ENCODE measurements at regions of chr12 and their contacts with region 1.

Region 1: DNA sequence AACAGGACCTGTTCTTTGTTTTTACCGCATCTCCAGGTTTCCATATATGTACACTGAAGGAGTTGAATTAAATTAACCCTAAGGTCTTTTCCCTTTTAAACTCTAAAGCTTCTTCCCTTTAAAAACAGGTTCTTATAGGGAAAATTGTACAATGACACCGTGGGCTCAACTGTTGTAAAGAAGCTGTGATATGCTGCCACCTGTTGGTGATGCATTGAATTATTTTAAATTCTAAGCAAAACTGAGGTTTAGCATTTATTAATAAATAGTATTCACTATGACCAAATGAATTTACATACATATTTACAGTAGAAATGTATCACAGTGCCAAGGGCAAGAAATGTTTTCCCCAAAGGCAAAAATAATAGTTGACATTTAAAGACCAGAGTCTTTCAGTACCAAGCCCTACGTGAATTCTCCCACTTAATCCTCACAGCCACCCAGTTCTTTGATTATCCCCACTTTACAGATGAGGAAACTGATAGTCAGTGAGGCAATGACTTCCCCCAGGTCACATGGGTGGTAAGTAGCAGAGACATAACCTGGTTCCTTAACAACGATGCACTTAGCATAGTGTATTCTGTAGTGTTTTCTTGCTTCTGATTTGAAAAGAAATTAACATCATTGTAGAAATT is 35.7 kb upstream of the TMEM263 start:
- DNase-seq: no peak
- ATAC-seq: no peak
- H3K4me3 Mint-ChIP-seq: peak overlapping the region; percentile 45
- H3K27ac Mint-ChIP-seq: no peak overlapping the region
- H3K4me1 Mint-ChIP-seq: peaks cover 28% of the 10 kb centered on the region
- H3K27me3 Mint-ChIP-seq: peaks cover 12% of the 10 kb centered on the region
- CTCF ChIP-seq: peak; percentile 63

Region 2: DNA sequence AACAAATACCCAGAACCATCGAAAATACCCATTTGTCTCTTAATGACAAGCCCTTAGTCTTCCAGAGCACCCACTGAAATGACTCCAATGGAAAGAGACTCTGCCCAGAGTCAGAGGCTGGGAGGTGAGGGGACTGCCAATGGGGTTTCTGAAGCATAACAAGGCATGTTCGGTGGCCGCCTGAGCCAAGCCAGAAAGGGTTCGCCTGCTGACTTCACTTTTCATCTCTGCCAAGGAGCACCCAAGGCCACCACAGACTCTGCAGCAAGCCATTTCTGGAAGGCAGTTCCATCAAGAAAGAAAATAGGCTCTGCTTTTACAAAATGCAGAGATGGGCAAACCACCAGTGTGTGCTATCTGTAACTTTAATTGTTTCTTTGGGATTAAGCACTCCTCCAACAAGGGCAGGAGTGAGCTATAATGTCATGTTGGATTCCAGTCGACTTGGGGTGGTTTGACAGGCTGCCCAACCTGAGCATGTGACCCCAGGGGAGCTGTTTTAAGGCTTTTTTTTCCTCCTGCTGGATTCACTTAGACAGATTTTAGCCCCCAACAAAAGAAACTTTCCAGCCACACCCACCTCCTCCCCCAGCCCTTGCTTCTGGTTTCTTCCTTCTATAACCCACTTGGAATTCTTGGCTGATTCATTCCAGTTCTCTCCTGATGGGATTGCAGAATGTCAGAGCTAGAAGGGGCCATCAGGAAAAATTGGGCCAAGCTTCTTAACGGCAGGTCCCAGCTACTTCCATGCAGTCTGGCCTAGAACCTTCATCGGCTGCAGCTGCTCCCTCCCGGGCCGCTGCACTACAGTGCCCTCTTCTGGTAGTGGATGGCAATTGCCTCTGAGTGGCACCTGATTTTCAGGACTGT is 696.3 kb before region 1 on chr12:
- CTCF ChIA-PET with region 1: interaction called, 25 read pairs
- POLR2A ChIA-PET with region 1: no interaction called
- DNase-seq: peak; percentile 84
- ATAC-seq: peak; percentile 95
- H3K4me3 Mint-ChIP-seq: no peak overlapping the region
- H3K27ac Mint-ChIP-seq: no peak overlapping the region
- H3K4me1 Mint-ChIP-seq: peaks cover 5% of the 10 kb centered on the region
- H3K27me3 Mint-ChIP-seq: no peaks in the 10 kb centered on the region
- CTCF ChIP-seq: peak; percentile 93

Region 3: DNA sequence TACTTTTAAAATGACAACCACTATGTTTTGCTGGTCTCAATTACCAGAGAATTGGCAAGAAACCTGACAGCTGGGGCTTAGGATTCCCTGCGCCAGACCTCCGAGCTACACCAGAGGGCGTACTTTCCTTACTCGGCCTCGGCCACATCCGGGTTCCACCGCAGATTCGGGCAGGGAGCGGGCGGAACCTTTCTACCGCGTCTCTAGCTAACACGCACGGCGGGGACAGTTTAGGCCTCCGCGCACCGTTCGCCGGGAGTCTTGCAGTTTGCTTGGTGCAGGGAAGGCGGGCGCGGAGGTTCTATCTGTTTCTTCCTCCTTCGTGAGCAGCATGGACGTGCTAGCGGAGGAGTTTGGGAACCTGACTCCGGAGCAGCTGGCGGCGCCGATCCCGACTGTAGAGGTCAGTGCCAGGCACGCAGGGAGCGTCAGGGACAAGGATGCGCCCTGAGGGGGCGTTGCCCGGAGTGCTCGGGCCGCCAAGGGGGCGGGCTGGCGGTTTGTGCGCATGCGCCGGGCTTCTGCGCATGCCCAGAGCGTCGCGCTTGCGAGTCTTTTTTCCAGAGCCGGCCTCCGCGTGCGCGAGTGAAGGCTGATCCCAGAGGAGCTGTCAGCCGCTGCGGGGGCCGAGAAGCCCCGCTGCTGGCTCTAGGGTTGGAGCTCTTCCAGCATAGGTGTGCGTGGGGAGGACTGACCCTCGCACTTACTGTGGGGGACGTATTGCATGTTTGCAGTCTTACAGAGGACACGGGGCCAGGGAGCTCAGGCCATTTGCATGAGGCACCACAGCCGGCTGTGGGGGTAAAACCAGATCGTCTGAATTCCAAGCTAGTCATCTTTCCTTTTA is 562.3 kb before region 1 on chr12 and contains the start of gene POLR3B:
- CTCF ChIA-PET with region 1: interaction called, 108 read pairs
- POLR2A ChIA-PET with region 1: interaction called, 9 read pairs
- DNase-seq: peak; percentile 95
- ATAC-seq: peak; percentile 91
- H3K4me3 Mint-ChIP-seq: peak within 1 kb of the TSS; percentile 86
- H3K27ac Mint-ChIP-seq: peak within 1 kb of the TSS; percentile 50
- H3K4me1 Mint-ChIP-seq: peaks cover 11% of the 10 kb centered on the region
- H3K27me3 Mint-ChIP-seq: no peaks in the 10 kb centered on the region; the same call in 1 of the 2 replicates
- CTCF ChIP-seq: peak; percentile 52
- total RNA-seq, gene POLR3B: 9.0 to 10.2 TPM (median 9.4 TPM) in 3 replicates

Region 4: GRCh38 chr12:106446419-106447092 is 473.5 kb before region 1 on chr12:
- CTCF ChIA-PET with region 1: interaction called, 14 read pairs
- POLR2A ChIA-PET with region 1: no interaction called
- DNase-seq: no peak
- ATAC-seq: no peak
- H3K4me3 Mint-ChIP-seq: no peak overlapping the region
- H3K27ac Mint-ChIP-seq: no peak overlapping the region
- H3K4me1 Mint-ChIP-seq: peaks cover 11% of the 10 kb centered on the region
- H3K27me3 Mint-ChIP-seq: no peaks in the 10 kb centered on the region
- CTCF ChIP-seq: no peak

Region 5: DNA sequence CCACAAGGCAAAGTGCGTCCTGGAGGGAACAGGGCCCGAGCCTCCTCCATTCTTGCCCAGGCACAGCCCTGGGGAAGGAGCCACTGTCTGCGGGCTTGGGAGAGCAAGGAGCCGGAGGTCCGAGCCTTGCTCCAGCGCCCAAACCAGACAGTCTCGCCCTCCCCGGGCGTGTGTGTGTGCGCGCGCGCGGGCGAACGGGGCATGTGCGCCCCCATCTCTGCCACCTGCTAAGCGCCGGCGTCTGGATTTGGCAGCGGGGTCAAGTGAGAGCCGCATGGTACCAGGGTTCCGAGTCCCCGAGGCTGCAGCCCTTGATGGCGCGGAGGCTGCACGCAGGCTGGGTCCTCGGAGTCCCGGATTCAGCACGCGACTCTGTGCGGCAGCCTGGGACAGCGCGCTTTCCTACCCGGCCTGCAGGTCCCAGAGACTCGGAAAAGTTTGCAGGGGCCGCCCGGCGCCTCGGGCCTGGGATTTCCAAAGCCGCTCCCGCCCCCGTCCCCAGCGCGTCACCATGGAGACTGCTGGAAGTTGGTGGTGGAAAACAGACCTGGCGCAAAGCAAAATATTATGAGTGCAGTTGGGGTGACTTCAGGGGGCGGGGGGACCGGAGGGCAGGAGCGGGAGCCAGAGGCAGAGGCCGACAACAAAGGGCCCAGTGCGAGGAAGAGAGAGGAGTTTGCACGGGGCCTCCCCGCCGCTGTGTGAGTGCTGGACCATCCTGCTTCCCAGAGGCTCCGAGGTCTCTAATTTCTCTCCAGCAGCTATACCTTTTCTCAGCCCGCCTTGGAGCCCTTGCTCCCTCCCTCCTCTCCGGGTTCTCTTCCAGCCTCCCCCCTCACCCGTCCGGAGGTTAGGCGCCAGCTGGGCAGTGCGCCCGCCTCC is 333.0 kb before region 1 on chr12:
- CTCF ChIA-PET with region 1: interaction called, 20 read pairs
- POLR2A ChIA-PET with region 1: no interaction called
- DNase-seq: peak; percentile 69
- ATAC-seq: peak; percentile 41
- H3K4me3 Mint-ChIP-seq: peak overlapping the region; percentile 79
- H3K27ac Mint-ChIP-seq: no peak overlapping the region
- H3K4me1 Mint-ChIP-seq: peaks cover 34% of the 10 kb centered on the region
- H3K27me3 Mint-ChIP-seq: peaks cover 95% of the 10 kb centered on the region
- CTCF ChIP-seq: no peak

Region 6: DNA sequence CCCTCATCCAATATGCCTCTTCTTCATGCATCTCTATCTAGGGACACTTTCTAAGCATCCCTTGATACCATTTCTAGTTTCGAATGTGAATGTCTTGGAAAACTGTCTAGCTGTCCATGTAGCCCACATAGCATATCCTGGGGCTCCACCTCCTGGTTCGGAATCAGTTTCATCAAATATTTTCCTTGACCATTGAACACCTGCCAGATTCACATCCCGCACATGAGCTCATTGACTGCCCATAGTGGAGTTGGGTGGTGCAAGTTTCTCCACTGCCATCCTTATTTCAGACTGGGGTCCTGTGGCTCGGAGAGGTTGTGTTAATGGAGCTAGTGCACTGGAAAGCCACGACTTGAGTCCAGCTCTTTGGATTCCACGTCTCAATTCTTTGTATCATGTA is 22.9 kb before region 1 on chr12:
- CTCF ChIA-PET with region 1: interaction called, 25 read pairs
- POLR2A ChIA-PET with region 1: no interaction called
- DNase-seq: no peak
- ATAC-seq: no peak
- H3K4me3 Mint-ChIP-seq: no peak overlapping the region
- H3K27ac Mint-ChIP-seq: no peak overlapping the region
- H3K4me1 Mint-ChIP-seq: peaks cover 18% of the 10 kb centered on the region
- H3K27me3 Mint-ChIP-seq: peaks cover 18% of the 10 kb centered on the region
- CTCF ChIP-seq: no peak